ENCODE measurements at regions of chr6 and their contacts with region 1.

Region 1: DNA sequence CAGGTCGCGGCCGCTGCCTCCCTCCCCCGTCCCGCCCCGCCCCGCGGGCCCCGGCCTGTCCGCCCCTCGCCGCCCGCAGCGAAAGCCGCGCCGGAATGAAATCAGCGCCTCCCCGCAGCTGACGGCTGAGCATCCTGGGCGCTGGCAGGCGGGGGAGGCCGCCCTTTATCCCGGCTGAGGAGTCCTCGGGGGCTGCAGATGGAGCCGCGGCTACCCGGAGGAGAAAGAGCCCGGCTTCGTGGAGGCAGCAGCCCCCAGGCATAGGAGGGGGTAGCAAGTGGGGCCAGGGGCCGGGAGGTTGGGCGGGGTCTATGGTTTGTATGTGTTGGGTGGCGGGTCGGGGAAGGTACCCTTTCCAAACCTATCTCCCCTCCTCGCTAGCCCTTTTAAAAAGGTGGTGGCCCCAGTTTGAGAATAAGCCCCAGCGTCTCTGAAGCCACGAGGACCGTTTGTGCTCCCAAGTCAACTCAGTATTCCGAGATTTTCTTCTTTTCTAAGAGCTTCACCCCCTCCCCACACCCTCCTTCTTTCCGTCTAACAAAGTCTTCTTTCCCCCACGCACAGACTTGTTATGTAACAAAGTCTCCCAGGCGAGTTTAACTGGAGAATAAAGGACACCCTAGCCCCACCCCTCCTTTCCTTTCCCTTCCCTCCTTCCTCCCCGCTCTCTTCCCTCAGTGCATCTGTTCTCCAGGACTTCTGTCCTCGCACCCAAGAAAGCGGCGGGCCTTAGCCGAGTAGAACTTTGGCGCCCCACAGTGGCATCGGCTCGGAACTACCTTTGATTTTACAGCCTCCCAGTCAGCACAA is 11.0 kb downstream of the POU3F2 start:
- DNase-seq: peak; percentile 11
- ATAC-seq: peak; percentile 87
- H3K4me3 ChIP-seq: no peak overlapping the region
- H3K27ac ChIP-seq: no peak overlapping the region
- H3K4me1 ChIP-seq: no peaks in the 10 kb centered on the region
- H3K27me3 ChIP-seq: peaks cover 8 to 34% of the 10 kb centered on the region in 2 experiments
- CTCF ChIP-seq: peak; percentile 90 to 93 (median 92)
- EP300 ChIP-seq: no peak
- POLR2A ChIP-seq: no peak
- RAD21 ChIP-seq: peak; percentile 95

Region 2: GRCh38 chr6:97497713-97498331 is 1347.6 kb before region 1 on chr6:
- CTCF ChIA-PET with region 1: no interaction called
- POLR2A ChIA-PET with region 1: no interaction called
- RAD21 ChIA-PET with region 1: no interaction called
- SMC1A ChIA-PET with region 1: no interaction called
- in situ Hi-C with region 1: loop called (anchors 5 kb)
- intact Hi-C with region 1: loop called (anchors 2 kb)
- DNase-seq: peak; percentile 12
- ATAC-seq: peak; percentile 100
- H3K4me3 ChIP-seq: no peak overlapping the region
- H3K27ac ChIP-seq: no peak overlapping the region
- H3K4me1 ChIP-seq: no peaks in the 10 kb centered on the region
- H3K27me3 ChIP-seq: no peaks in the 10 kb centered on the region
- CTCF ChIP-seq: peak; percentile 80 to 85 (median 84)
- EP300 ChIP-seq: no peak
- POLR2A ChIP-seq: no peak
- RAD21 ChIP-seq: peak; percentile 78

Region 3: GRCh38 chr6:97705568-97705967 is 1139.8 kb before region 1 on chr6:
- CTCF ChIA-PET with region 1: no interaction called
- POLR2A ChIA-PET with region 1: no interaction called
- RAD21 ChIA-PET with region 1: no interaction called
- SMC1A ChIA-PET with region 1: no interaction called
- in situ Hi-C with region 1: no loop called
- intact Hi-C with region 1: loop called (anchors 1 kb)
- DNase-seq: no peak
- ATAC-seq: no peak
- H3K4me3 ChIP-seq: no peak overlapping the region
- H3K27ac ChIP-seq: no peak overlapping the region
- H3K4me1 ChIP-seq: no peaks in the 10 kb centered on the region
- H3K27me3 ChIP-seq: no peaks in the 10 kb centered on the region
- CTCF ChIP-seq: peak; percentile 6 to 39 (median 37); a peak in 3 of 6 replicates
- EP300 ChIP-seq: no peak
- POLR2A ChIP-seq: no peak
- RAD21 ChIP-seq: peak; percentile 52

Region 4: DNA sequence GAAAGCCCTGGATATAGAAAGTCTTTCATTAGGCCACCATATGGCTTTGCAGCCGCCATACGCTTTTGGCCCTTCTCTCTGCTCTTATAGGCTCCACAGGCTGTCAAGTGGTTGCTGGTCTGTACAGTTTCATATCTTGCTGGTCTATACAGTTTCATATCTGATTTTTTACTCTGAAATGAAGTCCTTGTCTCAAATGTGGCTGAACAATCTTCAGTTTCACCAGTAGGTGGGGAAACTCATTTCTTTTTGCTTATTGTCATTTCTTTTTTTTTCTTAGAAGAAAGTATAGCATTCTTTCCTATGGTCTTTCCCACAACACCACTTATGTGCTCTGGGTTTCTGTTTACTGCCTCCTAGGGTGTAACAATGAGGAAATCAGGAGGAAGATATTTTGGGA is 791.0 kb before region 1 on chr6:
- CTCF ChIA-PET with region 1: interaction called, 3 read pairs
- POLR2A ChIA-PET with region 1: no interaction called
- RAD21 ChIA-PET with region 1: no interaction called
- SMC1A ChIA-PET with region 1: no interaction called
- in situ Hi-C with region 1: no loop called
- intact Hi-C with region 1: loop called (anchors 5 kb)
- DNase-seq: no peak
- ATAC-seq: peak; percentile 69
- H3K4me3 ChIP-seq: no peak overlapping the region
- H3K27ac ChIP-seq: no peak overlapping the region
- H3K4me1 ChIP-seq: no peaks in the 10 kb centered on the region
- H3K27me3 ChIP-seq: no peaks in the 10 kb centered on the region
- CTCF ChIP-seq: 0 out of 6 replicates have a peak, but pooled peaks of 1 of the 3 experiments have one; percentile 12
- EP300 ChIP-seq: no peak
- POLR2A ChIP-seq: no peak
- RAD21 ChIP-seq: no peak

Region 5: DNA sequence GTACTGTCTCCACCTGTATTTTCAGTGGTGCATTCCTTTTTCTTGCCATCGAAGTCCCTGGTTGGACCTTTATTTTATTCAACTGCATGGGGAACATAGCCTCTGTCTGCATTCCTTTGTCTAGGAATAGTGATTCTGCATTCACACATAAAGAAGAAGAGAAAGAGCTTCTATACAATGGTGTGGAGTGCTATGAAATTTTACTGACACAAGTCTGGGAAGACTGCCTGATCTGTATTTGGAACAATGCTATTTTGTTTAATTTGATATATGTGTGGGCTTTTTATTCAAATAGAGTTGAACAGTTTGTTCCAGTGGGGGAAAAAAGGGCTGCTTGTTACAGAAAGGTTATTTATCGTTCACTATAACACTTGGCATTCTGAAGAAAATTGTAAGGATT is 386.7 kb before region 1 on chr6:
- CTCF ChIA-PET with region 1: no interaction called
- POLR2A ChIA-PET with region 1: no interaction called
- RAD21 ChIA-PET with region 1: no interaction called
- SMC1A ChIA-PET with region 1: no interaction called
- in situ Hi-C with region 1: no loop called
- intact Hi-C with region 1: loop called (anchors 10 kb)
- DNase-seq: no peak
- ATAC-seq: no peak
- H3K4me3 ChIP-seq: no peak overlapping the region
- H3K27ac ChIP-seq: no peak overlapping the region
- H3K4me1 ChIP-seq: no peaks in the 10 kb centered on the region
- H3K27me3 ChIP-seq: no peaks in the 10 kb centered on the region
- CTCF ChIP-seq: no peak
- EP300 ChIP-seq: no peak
- POLR2A ChIP-seq: no peak
- RAD21 ChIP-seq: no peak

Region 6: DNA sequence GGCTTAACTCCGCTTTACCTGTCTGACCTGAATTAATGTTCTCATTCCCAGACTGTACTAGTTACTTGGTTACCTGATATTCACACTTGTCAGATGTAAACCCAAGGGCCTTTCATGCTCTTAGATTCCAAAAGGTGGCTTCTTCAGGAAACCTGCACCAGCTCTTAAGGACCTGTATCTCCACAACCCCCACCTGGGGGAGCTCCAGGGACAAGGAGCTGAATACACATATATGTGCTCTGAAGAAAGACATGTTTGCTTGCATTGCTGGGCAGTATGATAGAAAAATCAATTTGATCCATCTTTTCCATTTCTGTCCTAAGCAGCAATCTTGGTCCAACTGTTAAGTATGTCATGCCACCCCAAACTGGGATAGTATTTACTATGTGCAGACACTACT is 75.9 kb before region 1 on chr6:
- CTCF ChIA-PET with region 1: no interaction called
- POLR2A ChIA-PET with region 1: no interaction called
- RAD21 ChIA-PET with region 1: no interaction called
- SMC1A ChIA-PET with region 1: no interaction called
- in situ Hi-C with region 1: no loop called
- intact Hi-C with region 1: loop called (anchors 2 kb)
- DNase-seq: no peak
- ATAC-seq: peak; percentile 61
- H3K4me3 ChIP-seq: no peak overlapping the region
- H3K27ac ChIP-seq: no peak overlapping the region
- H3K4me1 ChIP-seq: no peaks in the 10 kb centered on the region
- H3K27me3 ChIP-seq: no peaks in the 10 kb centered on the region
- CTCF ChIP-seq: peak; percentile 14 to 25 (median 25); a peak in 2 of 6 replicates
- EP300 ChIP-seq: no peak
- POLR2A ChIP-seq: no peak
- RAD21 ChIP-seq: peak; percentile 41; the same call in 1 of the 2 replicates

Region 7: DNA sequence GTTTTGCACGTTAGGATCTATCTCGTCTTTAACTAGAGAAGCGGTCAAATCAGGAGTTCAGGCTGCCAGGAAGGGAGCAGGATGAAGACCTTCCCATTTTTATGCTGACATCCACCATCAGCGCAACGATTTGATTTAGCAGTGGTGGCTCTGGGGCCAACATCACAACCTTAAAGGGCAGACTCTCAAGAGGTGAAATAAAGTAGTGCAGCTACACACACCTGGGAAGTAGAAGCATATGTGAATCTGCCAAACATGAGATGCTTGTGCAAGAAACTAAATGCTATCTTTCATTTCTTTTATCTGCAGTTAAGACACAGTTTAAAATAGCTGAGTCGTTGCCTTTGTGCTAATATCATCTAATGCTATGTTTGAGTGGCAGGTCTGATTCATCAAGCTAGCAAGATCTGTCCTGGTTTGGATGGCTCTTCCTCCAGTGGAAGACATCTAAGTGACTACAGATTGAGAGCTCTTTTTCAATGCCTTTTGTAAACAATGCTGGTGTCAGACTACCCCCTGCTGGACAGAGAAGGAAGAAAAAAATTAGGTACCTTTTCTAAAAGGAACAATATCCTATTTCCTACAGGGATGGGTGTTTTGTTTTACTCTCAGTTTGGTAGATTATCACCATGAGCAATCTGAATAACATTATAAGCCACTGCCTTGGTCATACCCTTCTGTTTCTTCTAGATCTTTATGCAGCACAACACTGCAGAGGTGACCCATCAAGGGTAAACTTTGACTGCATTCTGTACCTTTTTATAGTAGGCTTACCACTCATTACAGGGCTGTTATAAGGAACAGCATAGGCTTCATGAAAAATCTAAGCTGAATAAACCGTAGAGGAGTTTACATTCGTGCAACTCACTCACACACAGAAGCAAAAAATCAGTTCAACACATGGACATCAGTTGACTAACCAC is 274.0 kb after region 1 on chr6:
- CTCF ChIA-PET with region 1: interaction called, 3 read pairs
- POLR2A ChIA-PET with region 1: no interaction called
- RAD21 ChIA-PET with region 1: no interaction called
- SMC1A ChIA-PET with region 1: no interaction called
- in situ Hi-C with region 1: no loop called
- intact Hi-C with region 1: loop called (anchors 5 kb)
- DNase-seq: no peak
- ATAC-seq: peak; percentile 62; the same call in 2 of the 3 replicates
- H3K4me3 ChIP-seq: no peak overlapping the region
- H3K27ac ChIP-seq: no peak overlapping the region
- H3K4me1 ChIP-seq: no peaks in the 10 kb centered on the region
- H3K27me3 ChIP-seq: no peaks in the 10 kb centered on the region; a peak in 1 of 4 replicates
- CTCF ChIP-seq: peak; percentile 52 to 68 (median 57); a peak in 5 of 6 replicates
- EP300 ChIP-seq: no peak
- POLR2A ChIP-seq: no peak
- RAD21 ChIP-seq: peak; percentile 86

Measured in GM12878 (cell line).